ENCODE measurements at regions of chr5 and their contacts with region 1.

Region 1: DNA sequence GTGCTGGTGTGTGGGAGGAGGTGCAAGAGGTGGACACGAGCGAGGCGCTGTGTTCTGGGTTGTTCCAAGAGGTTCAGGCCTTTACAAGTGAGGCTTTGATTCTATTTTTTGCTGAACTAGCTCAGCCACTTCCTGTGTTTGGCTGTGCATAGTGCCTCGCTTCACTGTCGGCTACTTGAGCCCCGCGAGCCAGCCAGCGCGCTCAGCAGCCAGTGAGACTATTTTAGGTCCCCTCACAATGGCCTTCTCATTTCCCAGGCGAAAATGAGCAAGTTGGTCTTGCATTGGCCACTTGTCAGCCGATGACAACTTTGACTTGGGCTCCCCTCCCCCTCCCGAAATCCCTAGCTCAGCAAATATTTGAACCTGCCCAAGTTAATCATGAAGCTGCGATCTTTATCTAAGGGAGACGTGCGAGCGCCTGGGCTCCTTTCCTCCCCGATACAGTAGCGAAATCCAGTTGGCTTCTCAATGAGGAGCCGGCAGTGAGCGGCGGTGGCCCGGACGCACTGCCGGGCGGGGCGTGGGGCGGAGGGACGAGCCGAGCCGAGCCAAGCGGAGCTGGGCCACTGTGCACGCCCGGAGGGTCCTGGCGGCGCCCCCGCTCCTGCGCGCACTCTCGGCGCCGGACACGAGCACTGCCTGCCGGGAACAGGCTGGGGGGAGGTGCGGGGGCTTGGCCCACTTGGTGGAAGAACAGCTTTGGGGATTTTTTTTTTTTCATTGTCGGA is 72.6 kb downstream of the PIK3R1 start:
- DNase-seq: no peak
- ATAC-seq: no peak
- H3K4me3 ChIP-seq: no peak overlapping the region
- H3K27ac ChIP-seq: no peak overlapping the region
- H3K4me1 ChIP-seq: 0 out of 4 replicates have a peak, but pooled peaks cover 0 to 5% of the 10 kb centered on the region in 2 experiments
- H3K27me3 ChIP-seq: no peaks in the 10 kb centered on the region
- CTCF ChIP-seq: no peak
- POLR2A ChIP-seq: no peak
- RAD21 ChIP-seq: no peak

Region 2: DNA sequence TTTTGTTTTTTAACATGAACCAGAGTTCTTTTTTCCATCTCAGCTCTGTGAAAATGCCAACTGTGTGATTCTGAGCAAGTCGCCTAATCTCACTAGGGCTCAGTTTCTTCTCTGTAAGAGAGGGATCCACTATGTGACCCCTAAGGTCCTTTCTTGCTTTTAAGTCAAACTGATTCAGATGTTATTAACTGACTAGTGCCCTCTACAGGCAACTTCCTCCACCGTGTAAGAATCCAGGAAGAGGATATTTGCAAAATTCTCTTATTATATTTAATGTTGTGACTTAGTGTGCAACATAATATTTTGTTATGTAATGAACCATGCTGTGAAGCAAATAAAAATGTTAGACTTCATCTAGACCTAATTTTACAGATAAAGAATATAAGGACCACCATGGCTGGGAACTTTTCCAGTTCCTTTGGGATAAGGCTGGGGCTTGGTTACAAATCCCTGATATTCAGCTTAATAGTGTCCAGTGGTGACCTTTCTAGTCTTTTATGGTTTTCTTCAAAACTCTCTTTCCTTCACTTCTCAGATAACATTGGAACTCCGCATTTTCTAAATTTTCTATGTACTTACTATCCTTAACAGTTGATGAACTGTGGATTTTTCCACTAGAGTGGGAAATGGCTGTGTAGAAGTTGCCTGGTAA is 172.1 kb after region 1 on chr5:
- CTCF ChIA-PET with region 1: interaction called, 13 read pairs
- POLR2A ChIA-PET with region 1: no interaction called
- RAD21 ChIA-PET with region 1: interaction called, 3 to 4 read pairs
- intact Hi-C with region 1: loop called (anchors 1 kb)
- DNase-seq: peak; percentile 60
- ATAC-seq: peak; percentile 82
- H3K4me3 ChIP-seq: no peak overlapping the region
- H3K27ac ChIP-seq: no peak overlapping the region
- H3K4me1 ChIP-seq: peaks cover 3 to 23% of the 10 kb centered on the region in 2 experiments; a peak in 2 of 4 replicates
- H3K27me3 ChIP-seq: no peaks in the 10 kb centered on the region
- CTCF ChIP-seq: peak; percentile 67 to 78 (median 67); a peak in 5 of 6 replicates
- POLR2A ChIP-seq: no peak
- RAD21 ChIP-seq: peak; percentile 83

Region 3: GRCh38 chr5:68661237-68661636 is 373.1 kb after region 1 on chr5:
- CTCF ChIA-PET with region 1: interaction called, 15 read pairs
- POLR2A ChIA-PET with region 1: no interaction called
- RAD21 ChIA-PET with region 1: no interaction called
- intact Hi-C with region 1: loop called (anchors 1 kb)
- DNase-seq: no peak
- ATAC-seq: peak; percentile 84
- H3K4me3 ChIP-seq: no peak overlapping the region
- H3K27ac ChIP-seq: no peak overlapping the region
- H3K4me1 ChIP-seq: peaks cover 0 to 6% of the 10 kb centered on the region in 2 experiments; a peak in 1 of 4 replicates
- H3K27me3 ChIP-seq: no peaks in the 10 kb centered on the region
- CTCF ChIP-seq: peak; percentile 9 to 60 (median 58); a peak in 5 of 6 replicates
- POLR2A ChIP-seq: no peak
- RAD21 ChIP-seq: peak; percentile 37

Region 4: GRCh38 chr5:68962757-68963484 is 674.8 kb after region 1 on chr5:
- CTCF ChIA-PET with region 1: interaction called, 7 read pairs
- POLR2A ChIA-PET with region 1: no interaction called
- RAD21 ChIA-PET with region 1: no interaction called
- intact Hi-C with region 1: loop called (anchors 2 kb)
- DNase-seq: peak; percentile 53
- ATAC-seq: peak; percentile 96
- H3K4me3 ChIP-seq: no peak overlapping the region
- H3K27ac ChIP-seq: no peak overlapping the region
- H3K4me1 ChIP-seq: peaks cover 0 to 8% of the 10 kb centered on the region in 2 experiments; a peak in 2 of 4 replicates
- H3K27me3 ChIP-seq: no peaks in the 10 kb centered on the region
- CTCF ChIP-seq: peak; percentile 75 to 90 (median 89); a peak in 5 of 6 replicates
- POLR2A ChIP-seq: no peak
- RAD21 ChIP-seq: peak; percentile 85